A673 (cell line): ENCODE measurements at regions of chr6 and their contacts with region 1.

Region 1: DNA sequence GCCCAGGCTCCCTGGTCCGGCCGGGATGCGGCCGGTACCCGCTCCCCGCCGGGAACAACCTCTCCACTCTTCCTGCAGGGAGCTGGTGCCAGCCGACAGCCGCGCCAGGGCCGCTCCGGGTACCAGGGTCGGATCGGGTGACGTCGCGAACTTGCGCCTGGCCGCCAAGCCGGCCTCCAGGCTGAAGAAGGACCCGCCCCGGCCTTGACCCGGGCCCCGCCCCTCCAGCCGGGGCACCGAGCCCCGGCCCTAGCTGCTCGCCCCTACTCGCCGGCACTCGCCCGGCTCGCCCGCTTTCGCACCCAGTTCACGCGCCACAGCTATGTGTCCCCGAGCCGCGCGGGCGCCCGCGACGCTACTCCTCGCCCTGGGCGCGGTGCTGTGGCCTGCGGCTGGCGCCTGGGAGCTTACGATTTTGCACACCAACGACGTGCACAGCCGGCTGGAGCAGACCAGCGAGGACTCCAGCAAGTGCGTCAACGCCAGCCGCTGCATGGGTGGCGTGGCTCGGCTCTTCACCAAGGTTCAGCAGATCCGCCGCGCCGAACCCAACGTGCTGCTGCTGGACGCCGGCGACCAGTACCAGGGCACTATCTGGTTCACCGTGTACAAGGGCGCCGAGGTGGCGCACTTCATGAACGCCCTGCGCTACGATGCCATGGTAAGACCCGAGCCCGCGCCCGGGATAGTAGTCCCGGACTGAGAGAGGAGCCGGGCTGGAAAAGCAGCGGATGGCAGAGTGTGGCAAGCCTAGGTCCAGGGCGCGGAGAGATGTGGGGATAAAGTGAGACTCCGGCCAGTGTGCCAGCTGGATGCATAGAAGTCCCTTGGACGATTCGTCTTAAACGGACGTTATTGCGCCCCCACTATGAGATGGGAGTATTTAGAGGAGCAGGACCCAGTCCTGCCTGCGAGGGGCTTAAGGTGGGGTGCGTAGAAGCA is at the start of gene NT5E:
- DNase-seq: peak; percentile 83
- H3K4me3 ChIP-seq: peak within 1 kb of the TSS; percentile 60
- H3K27ac ChIP-seq: peak within 1 kb of the TSS; percentile 67
- H3K4me1 ChIP-seq: peaks cover 5% of the 10 kb centered on the region
- H3K27me3 ChIP-seq: peaks cover 5% of the 10 kb centered on the region
- CTCF ChIP-seq: peak; percentile 35; the same call in 1 of the 2 replicates
- total RNA-seq, gene NT5E: 26.0 and 32.7 TPM in 2 replicates

Region 2: DNA sequence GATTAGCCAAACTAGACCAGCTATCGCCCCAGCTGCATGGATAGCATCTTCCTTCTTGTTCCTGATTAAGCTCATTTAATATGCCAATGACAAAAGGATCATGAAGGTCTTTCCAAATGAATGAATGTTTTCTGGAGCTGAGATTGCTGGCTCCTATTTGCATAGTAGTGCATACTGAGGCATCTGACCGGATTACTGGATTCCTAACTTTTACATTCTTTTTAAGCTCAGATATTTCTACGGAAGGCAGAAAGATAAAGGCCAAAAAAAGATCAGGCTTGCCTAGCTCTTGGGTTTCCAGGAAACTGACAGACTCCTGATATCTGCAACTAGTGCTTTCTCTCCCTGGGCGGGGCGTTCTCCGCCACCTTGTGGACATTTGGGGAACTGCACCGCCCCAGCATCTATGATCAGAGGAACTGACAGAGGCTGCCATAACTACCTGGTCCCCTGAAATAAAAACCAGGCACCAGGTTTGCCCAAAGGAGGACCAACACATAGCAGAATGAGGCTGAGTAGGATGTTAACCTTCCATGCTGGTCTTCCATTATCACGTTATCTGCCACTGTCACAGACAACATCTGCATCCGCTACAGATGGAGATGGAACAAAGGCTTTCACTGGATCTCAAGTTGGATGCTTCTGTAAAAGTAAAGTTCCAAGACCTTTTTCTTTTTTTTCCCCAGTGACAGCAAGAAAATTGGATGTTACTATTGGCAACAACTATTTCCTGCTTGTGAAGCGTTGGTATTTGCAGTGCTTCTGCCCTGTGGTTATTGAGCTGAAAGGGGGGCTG is 33.0 kb after region 1 on chr6:
- CTCF ChIA-PET with region 1: interaction called, 11 read pairs
- POLR2A ChIA-PET with region 1: no interaction called
- intact Hi-C with region 1: loop called (anchors 2 kb)
- DNase-seq: peak; percentile 83
- H3K4me3 ChIP-seq: no peak overlapping the region
- H3K27ac ChIP-seq: no peak overlapping the region
- H3K4me1 ChIP-seq: no peaks in the 10 kb centered on the region
- H3K27me3 ChIP-seq: no peaks in the 10 kb centered on the region
- CTCF ChIP-seq: peak; percentile 99